IMR-90 (cell line): ENCODE measurements at regions of chr2 and their contacts with region 1.

Region 1: DNA sequence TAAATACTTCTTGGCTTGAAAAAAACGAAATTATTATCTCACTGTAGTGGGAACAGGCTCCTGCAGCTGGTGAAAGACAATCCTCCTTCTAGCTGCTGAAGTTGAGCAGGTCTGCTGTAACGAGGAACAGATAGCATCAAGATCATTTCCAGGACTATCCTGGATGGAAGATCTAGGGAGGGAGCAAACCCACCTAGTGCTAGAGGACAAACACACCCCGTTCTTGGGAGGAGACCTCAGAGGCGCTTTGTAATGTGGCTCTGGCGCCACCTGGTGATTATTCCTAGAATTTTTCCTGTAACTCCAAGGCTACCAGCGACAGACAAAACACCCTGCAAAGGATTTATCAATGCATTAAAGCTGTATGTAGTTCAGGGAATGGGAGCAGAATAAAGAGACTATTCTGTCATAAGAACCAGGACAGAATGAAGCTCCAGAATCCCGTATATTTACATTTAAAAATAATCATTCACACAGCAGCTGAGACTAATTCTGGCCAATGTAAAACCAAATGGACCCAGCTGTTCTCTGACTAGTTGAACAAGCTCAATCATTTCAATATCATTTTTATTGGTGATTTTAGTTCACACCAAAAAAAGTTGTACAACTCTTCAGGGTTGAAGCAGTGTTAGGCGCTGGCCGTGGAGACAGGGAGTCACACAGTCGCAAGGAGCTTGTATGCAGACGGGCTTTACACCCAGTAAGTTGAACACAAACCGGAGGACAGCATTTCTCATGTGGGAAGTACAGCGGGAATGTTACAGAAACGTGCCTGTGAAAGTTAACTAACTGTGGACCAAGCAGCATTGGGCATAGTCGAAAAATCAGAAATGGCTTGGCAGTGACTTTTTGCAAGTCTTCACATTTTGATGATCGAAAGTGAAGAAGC is 290.3 kb downstream of the TRIB2 start:
- DNase-seq: peak; percentile 65
- ATAC-seq: peak; percentile 95
- H3K4me3 ChIP-seq: no peak overlapping the region
- H3K27ac ChIP-seq: no peak overlapping the region
- H3K4me1 ChIP-seq: 0 out of 2 replicates have a peak, but pooled peaks cover 2% of the 10 kb centered on the region
- H3K27me3 ChIP-seq: 0 out of 2 replicates have a peak, but pooled peaks cover 3% of the 10 kb centered on the region
- CTCF ChIP-seq: peak; percentile 82
- POLR2A ChIP-seq: 0 out of 2 replicates have a peak, but pooled peaks have one; percentile 30
- RAD21 ChIP-seq: peak; percentile 94

Region 2: DNA sequence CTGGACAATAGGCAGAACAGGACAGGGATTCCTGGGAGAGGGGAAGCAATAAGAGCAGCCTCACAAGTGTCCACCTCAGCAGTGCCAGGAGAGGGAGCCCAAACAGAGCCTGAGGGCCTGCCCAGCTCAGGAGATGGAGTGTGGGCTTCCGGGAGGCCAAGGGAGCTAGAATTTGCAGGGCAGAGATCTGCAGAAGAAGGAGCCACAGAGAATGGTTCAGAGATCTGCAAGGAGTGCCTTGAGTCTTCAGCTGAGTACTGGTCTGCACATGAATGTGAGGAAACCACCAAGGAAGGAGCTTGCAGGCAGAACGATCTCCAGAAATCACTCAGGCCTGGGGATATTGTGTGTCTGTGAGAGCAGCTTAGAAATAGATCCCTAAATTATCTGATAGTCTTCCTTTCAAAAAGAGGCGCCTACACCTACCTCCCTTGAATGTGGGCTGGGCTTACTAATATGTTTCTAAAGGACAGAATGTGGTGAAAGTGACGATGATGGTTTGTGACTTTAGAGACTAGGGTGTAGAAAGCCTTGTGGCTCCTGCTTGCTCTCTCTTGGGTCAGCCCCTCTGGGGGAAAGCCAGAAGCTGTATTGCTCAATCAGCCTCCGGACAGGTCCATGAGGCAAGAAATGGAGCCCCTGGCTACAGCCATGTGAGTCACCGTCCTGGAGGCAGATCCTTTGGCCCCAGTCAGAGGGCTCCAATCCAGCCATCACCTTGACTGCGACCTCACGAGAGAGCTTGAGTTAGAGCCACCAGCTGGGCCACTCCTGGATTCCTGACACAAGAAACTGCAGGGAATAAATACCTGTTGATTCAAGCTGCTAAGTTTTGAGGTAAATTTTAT is 1268.3 kb before region 1 on chr2:
- CTCF ChIA-PET with region 1: no interaction called
- POLR2A ChIA-PET with region 1: no interaction called
- dilution Hi-C with region 1: no loop called
- in situ Hi-C with region 1: no loop called
- intact Hi-C with region 1: loop called (anchors 2 kb)
- DNase-seq: peak; percentile 87
- ATAC-seq: peak; percentile 86
- H3K4me3 ChIP-seq: no peak overlapping the region
- H3K27ac ChIP-seq: no peak overlapping the region
- H3K4me1 ChIP-seq: peaks cover 3% of the 10 kb centered on the region; the same call in 1 of the 2 replicates
- H3K27me3 ChIP-seq: peaks cover 12% of the 10 kb centered on the region
- CTCF ChIP-seq: peak; percentile 59
- POLR2A ChIP-seq: no peak
- RAD21 ChIP-seq: peak; percentile 70

Region 3: DNA sequence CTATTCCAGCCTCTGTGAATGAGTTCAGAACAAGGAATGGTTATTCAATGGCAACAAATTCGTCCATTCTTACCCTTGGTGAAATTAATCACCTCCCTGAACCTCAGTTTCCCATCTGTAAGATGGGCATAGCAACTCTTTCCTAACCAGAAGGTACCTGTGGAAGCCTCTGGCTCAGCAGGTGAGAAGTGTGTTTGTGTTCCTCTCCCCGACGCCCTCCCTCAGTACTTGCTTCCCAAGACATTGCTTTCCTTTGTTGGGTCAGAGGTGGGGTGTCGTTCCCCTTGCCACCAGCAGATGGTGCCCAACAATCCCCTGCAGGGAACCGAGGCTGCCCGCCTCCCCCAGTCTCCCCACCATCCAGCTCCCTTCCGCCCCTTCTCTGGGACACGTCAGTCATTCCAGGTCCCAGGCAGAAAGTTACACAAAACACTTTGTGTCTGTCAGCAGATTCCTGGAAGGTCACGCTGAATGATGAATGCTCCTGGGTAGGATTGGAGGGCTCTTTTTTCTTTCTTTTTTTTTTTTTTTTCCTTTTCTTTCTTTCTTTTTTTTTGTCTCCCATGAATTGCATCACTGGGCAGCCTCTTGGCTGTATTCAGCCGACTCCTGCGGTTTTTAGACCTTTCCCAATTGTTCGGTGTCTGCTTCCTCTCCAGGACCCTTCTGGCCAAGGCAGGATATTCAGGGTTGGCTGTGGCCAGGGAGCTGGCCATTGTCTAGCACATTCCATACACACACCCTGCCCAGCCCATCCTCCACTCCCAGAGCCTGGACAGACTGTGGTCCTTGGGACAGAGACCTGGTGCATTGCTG is 1143.4 kb before region 1 on chr2:
- CTCF ChIA-PET with region 1: interaction called, 4 read pairs
- POLR2A ChIA-PET with region 1: no interaction called
- dilution Hi-C with region 1: no loop called
- in situ Hi-C with region 1: no loop called
- intact Hi-C with region 1: loop called (anchors 2 kb)
- DNase-seq: peak; percentile 82
- ATAC-seq: peak; percentile 99
- H3K4me3 ChIP-seq: peak overlapping the region; percentile 10; the same call in 1 of the 2 replicates
- H3K27ac ChIP-seq: peak overlapping the region; percentile 66
- H3K4me1 ChIP-seq: peaks cover 2% of the 10 kb centered on the region; the same call in 1 of the 2 replicates
- H3K27me3 ChIP-seq: no peaks in the 10 kb centered on the region; the same call in 1 of the 2 replicates
- CTCF ChIP-seq: peak; percentile 85
- POLR2A ChIP-seq: no peak
- RAD21 ChIP-seq: peak; percentile 93

Region 4: GRCh38 chr2:12120281-12121150 is 886.6 kb before region 1 on chr2:
- CTCF ChIA-PET with region 1: no interaction called
- POLR2A ChIA-PET with region 1: no interaction called
- dilution Hi-C with region 1: no loop called
- in situ Hi-C with region 1: no loop called
- intact Hi-C with region 1: loop called (anchors 1 kb)
- DNase-seq: peak; percentile 80
- ATAC-seq: peak; percentile 87
- H3K4me3 ChIP-seq: no peak overlapping the region
- H3K27ac ChIP-seq: peak overlapping the region; percentile 63
- H3K4me1 ChIP-seq: peaks cover 15% of the 10 kb centered on the region
- H3K27me3 ChIP-seq: no peaks in the 10 kb centered on the region
- CTCF ChIP-seq: no peak
- POLR2A ChIP-seq: no peak
- RAD21 ChIP-seq: no peak

Region 5: DNA sequence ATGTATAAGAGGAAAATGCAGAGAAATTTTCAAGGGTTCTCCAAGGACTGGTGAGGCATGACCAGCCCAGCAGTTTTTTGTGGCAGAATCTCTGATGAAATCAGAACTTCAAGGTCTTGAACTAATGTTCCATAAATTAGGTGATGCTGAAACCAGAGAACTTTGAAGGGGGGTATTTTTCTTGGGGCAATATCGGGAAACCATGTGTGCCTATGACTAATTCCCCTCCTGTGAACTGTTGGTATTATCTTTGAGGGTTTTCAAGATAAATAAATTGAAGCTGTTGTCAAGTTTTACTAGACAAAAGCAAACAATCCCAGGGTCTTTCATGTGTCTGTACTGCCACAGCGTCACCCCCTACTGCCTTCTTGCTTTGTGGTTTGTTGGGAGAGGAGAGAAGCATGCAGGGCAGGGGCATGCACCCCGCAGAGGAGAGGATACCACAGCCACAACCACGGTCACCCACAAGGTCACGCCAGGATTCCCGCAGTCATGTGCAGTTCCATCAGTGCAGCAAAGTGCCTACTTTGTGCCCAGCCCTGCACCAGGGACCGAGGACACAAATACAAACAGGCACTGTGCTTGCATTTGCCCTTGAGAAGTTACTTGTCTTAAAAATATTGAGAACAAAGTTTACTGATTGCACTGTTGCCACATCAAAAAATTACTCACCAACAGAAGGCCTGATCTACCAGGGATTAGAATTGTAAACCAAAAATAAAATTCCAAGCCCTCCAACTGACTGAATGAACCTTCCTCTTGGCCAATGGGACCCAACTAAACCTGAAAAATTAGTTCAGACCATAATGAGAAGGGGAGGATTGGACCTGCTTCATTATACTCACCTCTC is 703.7 kb before region 1 on chr2:
- CTCF ChIA-PET with region 1: no interaction called
- POLR2A ChIA-PET with region 1: no interaction called
- dilution Hi-C with region 1: no loop called
- in situ Hi-C with region 1: no loop called
- intact Hi-C with region 1: loop called (anchors 5 kb)
- DNase-seq: peak; percentile 83
- ATAC-seq: peak; percentile 69
- H3K4me3 ChIP-seq: no peak overlapping the region
- H3K27ac ChIP-seq: peak overlapping the region; percentile 53
- H3K4me1 ChIP-seq: peaks cover 15% of the 10 kb centered on the region
- H3K27me3 ChIP-seq: no peaks in the 10 kb centered on the region
- CTCF ChIP-seq: no peak
- POLR2A ChIP-seq: no peak
- RAD21 ChIP-seq: no peak; the same call in 1 of the 2 replicates

Region 6: GRCh38 chr2:12534646-12535263 is 472.3 kb before region 1 on chr2:
- CTCF ChIA-PET with region 1: no interaction called
- POLR2A ChIA-PET with region 1: no interaction called
- dilution Hi-C with region 1: no loop called
- in situ Hi-C with region 1: no loop called
- intact Hi-C with region 1: loop called (anchors 10 kb)
- DNase-seq: peak; percentile 97
- ATAC-seq: peak; percentile 89
- H3K4me3 ChIP-seq: peak overlapping the region; percentile 22; the same call in 1 of the 2 replicates
- H3K27ac ChIP-seq: peak overlapping the region; percentile 87
- H3K4me1 ChIP-seq: peaks cover 3% of the 10 kb centered on the region; the same call in 1 of the 2 replicates
- H3K27me3 ChIP-seq: no peaks in the 10 kb centered on the region
- CTCF ChIP-seq: no peak
- POLR2A ChIP-seq: no peak
- RAD21 ChIP-seq: peak; percentile 34